G401 (cell line): ENCODE measurements at regions of chr2 and their contacts with region 1.

Region 1: DNA sequence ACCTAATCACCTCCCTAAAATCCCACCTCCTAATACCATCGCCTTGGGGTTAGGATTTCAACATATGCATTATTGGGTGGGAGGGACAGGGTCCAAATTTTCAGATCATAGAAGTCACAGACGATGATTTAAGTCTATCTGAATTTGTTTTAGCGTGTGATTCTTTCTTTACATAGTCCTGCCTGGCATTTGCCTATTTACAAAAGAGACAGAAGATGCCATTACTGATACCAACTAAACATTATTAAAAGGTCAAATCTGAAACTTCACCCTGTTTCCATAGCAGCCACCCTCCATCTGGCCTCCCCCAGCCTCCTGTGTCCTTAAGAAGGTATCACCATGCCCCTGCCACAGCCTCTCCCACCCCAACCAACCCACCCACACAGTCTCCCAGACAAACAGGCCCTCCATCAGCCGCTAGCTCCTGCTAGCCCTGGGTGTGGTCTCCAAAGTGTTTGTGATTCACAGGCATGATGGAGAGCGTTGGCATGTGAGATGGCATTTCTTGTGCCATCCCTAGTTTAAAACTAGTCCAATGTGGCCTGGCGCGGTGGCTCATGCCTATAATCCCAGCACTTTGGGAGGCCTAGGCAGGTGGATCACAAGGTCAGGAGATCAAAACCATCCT is 45.0 kb upstream of the GPR45 start:
- DNase-seq: no peak

Region 2: GRCh38 chr2:105129722-105130232 is 66.8 kb before region 1 on chr2:
- in situ Hi-C with region 1: loop called (anchors 5 kb)
- DNase-seq: no peak

Region 3: GRCh38 chr2:105150231-105150932 is 46.1 kb before region 1 on chr2:
- in situ Hi-C with region 1: no loop called
- DNase-seq: no peak

Region 4: DNA sequence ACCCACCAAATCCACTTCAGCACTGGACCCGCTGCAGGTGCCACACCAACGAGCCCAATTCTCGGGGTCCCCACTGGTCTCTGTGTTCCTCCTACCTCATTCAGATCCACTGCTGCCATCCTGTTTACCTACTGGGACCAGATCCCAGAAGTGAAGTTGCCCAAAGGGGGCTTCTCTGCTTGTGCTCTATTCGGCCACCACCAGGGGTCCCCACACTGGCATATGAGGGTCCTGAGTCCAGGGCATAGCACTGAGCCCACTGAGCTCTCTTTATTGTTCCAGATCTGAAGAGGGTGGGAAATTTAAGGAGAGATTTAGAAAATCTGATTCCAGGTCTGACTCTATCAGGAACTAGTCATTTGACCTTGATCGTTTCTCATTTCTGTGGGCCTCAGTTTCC is 47.4 kb after region 1 on chr2:
- in situ Hi-C with region 1: loop called (anchors 5 kb)
- DNase-seq: no peak